ENCODE measurements at regions of chr12 and their contacts with region 1.

Region 1: DNA sequence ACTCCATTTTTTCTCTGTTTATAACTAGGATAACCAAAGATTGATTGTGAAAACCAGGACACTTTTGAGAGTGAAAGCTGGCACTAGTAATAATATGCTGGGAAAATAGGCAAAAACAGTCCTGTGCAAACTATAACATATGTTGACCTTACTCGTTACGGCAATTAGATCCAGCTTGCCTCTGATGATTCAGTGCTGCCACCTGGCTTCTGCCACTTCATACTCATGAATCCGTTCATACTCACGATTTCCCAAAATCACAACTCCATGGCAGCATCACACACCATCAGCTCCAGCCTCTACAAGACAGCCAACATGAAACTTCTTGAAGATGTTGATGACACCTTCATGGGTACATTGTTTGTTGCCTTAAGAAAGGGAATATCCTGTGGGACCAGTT is 49.1 kb upstream of the CAND1 start:
- DNase-seq: no peak
- ATAC-seq: no peak

Region 2: DNA sequence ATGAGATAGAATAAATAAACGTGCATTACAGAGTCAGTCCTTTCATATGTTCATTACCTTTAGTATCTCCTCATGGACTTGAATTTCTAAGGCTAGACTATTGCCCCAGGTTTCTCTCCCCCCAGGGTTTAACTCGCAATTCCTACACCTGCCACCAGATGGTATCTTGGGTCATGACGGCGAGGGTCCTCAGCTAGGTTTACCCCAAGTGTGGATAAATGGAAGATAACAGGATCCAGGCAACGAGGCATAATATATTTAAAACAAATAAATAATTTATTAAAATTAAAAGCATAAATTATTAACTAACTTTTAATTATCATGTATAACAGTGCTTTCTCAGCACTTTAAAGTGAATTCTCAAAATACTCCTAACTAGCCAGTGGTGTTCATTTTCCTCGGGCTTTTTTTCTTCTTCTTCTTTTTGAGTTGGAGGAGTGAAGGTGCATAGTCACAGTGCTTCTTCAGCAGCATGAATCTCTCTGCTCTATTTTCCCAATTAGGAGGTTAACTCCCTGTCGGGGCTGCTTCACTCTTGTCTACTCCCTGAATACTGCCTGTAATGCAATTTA is 194.4 kb before region 1 on chr12:
- intact Hi-C with region 1: loop called (anchors 5 kb)
- DNase-seq: no peak
- ATAC-seq: no peak

Region 3: GRCh38 chr12:67161322-67161918 is 58.6 kb before region 1 on chr12:
- intact Hi-C with region 1: loop called (anchors 1 kb)
- DNase-seq: no peak
- ATAC-seq: no peak

Measured in Right ventricle myocardium inferior (tissue), 1 donor.